ENCODE measurements at regions of chr16 and their contacts with region 1.

Region 1: GRCh38 chr16:85821441-85822135 is 22.1 kb downstream of the COX4I1 start:
- DNase-seq: peak; percentile 56 to 88 (median 79)
- ATAC-seq: peak; percentile 93
- H3K4me3 ChIP-seq: no peak overlapping the region
- H3K4me3 Mint-ChIP-seq: no peak overlapping the region
- H3K27ac ChIP-seq: no peak overlapping the region
- H3K27ac Mint-ChIP-seq: no peak overlapping the region
- H3K4me1 ChIP-seq: no peaks in the 10 kb centered on the region
- H3K4me1 Mint-ChIP-seq: peaks cover 0 to 7% (median 5%) of the 10 kb centered on the region in 7 donors
- H3K27me3 ChIP-seq: no peaks in the 10 kb centered on the region
- H3K27me3 Mint-ChIP-seq: peaks cover 0 to 6% (median 4%) of the 10 kb centered on the region in 5 donors

Region 2: GRCh38 chr16:84315394-84315793 is 1506.2 kb before region 1 on chr16:
- CTCF ChIA-PET with region 1: no interaction called
- POLR2A ChIA-PET with region 1: no interaction called
- intact Hi-C with region 1: no loop called
- DNase-seq: no peak
- ATAC-seq: no peak
- H3K4me3 ChIP-seq: no peak overlapping the region
- H3K4me3 Mint-ChIP-seq: no peak overlapping the region
- H3K27ac ChIP-seq: no peak overlapping the region
- H3K27ac Mint-ChIP-seq: no peak overlapping the region
- H3K4me1 ChIP-seq: no peaks in the 10 kb centered on the region
- H3K4me1 Mint-ChIP-seq: peaks cover 0 to 5% (median 0%) of the 10 kb centered on the region in 7 donors
- H3K27me3 ChIP-seq: no peaks in the 10 kb centered on the region
- H3K27me3 Mint-ChIP-seq: peaks cover 17 to 40% (median 33%) of the 10 kb centered on the region in 5 donors

Region 3: DNA sequence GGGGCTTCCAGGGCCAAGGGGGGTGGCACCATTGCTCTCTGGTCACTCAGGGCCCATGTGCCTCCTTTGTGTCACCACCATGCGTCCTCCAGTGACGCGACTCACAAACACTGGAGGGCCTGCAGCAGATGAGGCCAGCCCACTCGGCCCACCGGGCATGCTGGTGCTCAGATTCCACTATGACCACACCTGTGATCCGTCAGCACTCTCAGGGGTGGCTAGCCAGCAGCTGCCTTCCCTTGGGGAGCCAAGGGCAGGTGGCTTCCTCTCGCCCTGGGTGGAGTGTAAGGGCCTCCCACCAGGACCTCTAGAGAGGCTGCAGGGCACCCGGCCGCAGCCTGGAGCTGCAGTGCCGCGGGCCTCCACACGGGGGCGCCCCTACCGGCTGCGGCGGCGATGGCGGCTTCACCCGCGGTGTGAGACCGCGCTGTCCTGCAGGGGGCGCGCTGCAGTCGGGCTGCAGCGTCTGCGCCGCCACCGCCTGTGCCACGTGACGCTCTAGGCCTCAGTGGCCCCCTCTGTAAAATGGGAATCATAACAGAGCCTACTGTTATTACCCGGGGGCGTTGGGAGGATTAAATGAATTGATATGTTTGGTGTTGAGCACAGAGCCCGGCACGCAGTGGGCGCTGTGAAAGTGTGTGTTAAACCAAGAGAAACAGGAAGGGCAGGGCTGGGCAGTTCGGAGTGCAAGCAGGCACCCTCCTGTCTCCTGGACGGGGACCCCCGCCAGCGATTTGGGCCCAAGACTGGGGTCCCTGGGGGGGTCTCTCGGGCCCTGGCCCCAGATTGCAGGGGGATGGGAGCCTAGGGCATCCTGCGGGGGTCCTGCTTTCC is 400.9 kb before region 1 on chr16:
- CTCF ChIA-PET with region 1: no interaction called
- POLR2A ChIA-PET with region 1: no interaction called
- intact Hi-C with region 1: no loop called
- DNase-seq: peak; percentile 29 to 90 (median 71)
- ATAC-seq: peak; percentile 95
- H3K4me3 ChIP-seq: no peak overlapping the region
- H3K4me3 Mint-ChIP-seq: no peak overlapping the region
- H3K27ac ChIP-seq: no peak overlapping the region
- H3K27ac Mint-ChIP-seq: no peak overlapping the region
- H3K4me1 ChIP-seq: peaks cover 0 to 10% of the 10 kb centered on the region in 2 donors
- H3K4me1 Mint-ChIP-seq: peaks cover 0 to 10% (median 0%) of the 10 kb centered on the region in 7 donors
- H3K27me3 ChIP-seq: no peaks in the 10 kb centered on the region
- H3K27me3 Mint-ChIP-seq: peaks cover 0 to 4% (median 0%) of the 10 kb centered on the region in 5 donors

Region 4: GRCh38 chr16:85799497-85800337 is 21.9 kb before region 1 on chr16 and contains the starts of genes COX4I1 and EMC8:
- CTCF ChIA-PET with region 1: interaction called, 4 read pairs
- POLR2A ChIA-PET with region 1: no interaction called
- intact Hi-C with region 1: loop called in 1 of 2 experiments (anchors 1 kb)
- DNase-seq: peak; percentile 86 to 95 (median 90)
- ATAC-seq: peak; percentile 92
- H3K4me3 ChIP-seq: peak within 1 kb of the TSS; percentile 81
- H3K4me3 Mint-ChIP-seq: peak within 1 kb of the TSS; percentile 86 to 94 (median 90)
- H3K27ac ChIP-seq: peak within 1 kb of the TSS; percentile 99
- H3K27ac Mint-ChIP-seq: peak within 1 kb of the TSS; percentile 90 to 98 (median 95)
- H3K4me1 ChIP-seq: peaks cover 18 to 26% of the 10 kb centered on the region in 2 donors
- H3K4me1 Mint-ChIP-seq: peaks cover 37 to 77% (median 68%) of the 10 kb centered on the region in 7 donors
- H3K27me3 ChIP-seq: no peaks in the 10 kb centered on the region
- H3K27me3 Mint-ChIP-seq: no peaks in the 10 kb centered on the region
- total RNA-seq, gene COX4I1: 479 to 692 (median 661) TPM
- total RNA-seq, gene EMC8: 22.4 to 31.8 (median 28.7) TPM

Region 5: GRCh38 chr16:85935974-85936760 is 114.6 kb after region 1 on chr16:
- CTCF ChIA-PET with region 1: interaction called, 9 read pairs
- POLR2A ChIA-PET with region 1: no interaction called
- intact Hi-C with region 1: loop called (anchors 1 kb)
- DNase-seq: peak; percentile 40 to 80 (median 74)
- ATAC-seq: peak; percentile 91
- H3K4me3 ChIP-seq: peak overlapping the region; percentile 52
- H3K4me3 Mint-ChIP-seq: peak overlapping the region; percentile 72 to 88 (median 82)
- H3K27ac ChIP-seq: peak overlapping the region; percentile 68
- H3K27ac Mint-ChIP-seq: peak overlapping the region; percentile 91 to 98 (median 95)
- H3K4me1 ChIP-seq: peaks cover 25 to 29% of the 10 kb centered on the region in 2 donors
- H3K4me1 Mint-ChIP-seq: peaks cover 34 to 54% (median 40%) of the 10 kb centered on the region in 7 donors
- H3K27me3 ChIP-seq: no peaks in the 10 kb centered on the region
- H3K27me3 Mint-ChIP-seq: peaks cover 0 to 3% (median 0%) of the 10 kb centered on the region in 5 donors

Region 6: GRCh38 chr16:85986931-85987749 is 165.6 kb after region 1 on chr16:
- CTCF ChIA-PET with region 1: interaction called, 168 read pairs
- POLR2A ChIA-PET with region 1: interaction called, 5 read pairs
- intact Hi-C with region 1: loop called (anchors 1 kb)
- DNase-seq: peak in 7 of 9 donors; percentile 11 to 44 (median 26)
- ATAC-seq: no peak
- H3K4me3 ChIP-seq: no peak overlapping the region
- H3K4me3 Mint-ChIP-seq: peak overlapping the region in 1 of 10 donors; percentile 56
- H3K27ac ChIP-seq: no peak overlapping the region
- H3K27ac Mint-ChIP-seq: peak overlapping the region in 1 of 9 donors; percentile 81
- H3K4me1 ChIP-seq: peaks cover 3 to 4% of the 10 kb centered on the region in 2 donors
- H3K4me1 Mint-ChIP-seq: peaks cover 0 to 53% (median 6%) of the 10 kb centered on the region in 7 donors
- H3K27me3 ChIP-seq: no peaks in the 10 kb centered on the region
- H3K27me3 Mint-ChIP-seq: peaks cover 0 to 16% (median 5%) of the 10 kb centered on the region in 5 donors

Region 7: DNA sequence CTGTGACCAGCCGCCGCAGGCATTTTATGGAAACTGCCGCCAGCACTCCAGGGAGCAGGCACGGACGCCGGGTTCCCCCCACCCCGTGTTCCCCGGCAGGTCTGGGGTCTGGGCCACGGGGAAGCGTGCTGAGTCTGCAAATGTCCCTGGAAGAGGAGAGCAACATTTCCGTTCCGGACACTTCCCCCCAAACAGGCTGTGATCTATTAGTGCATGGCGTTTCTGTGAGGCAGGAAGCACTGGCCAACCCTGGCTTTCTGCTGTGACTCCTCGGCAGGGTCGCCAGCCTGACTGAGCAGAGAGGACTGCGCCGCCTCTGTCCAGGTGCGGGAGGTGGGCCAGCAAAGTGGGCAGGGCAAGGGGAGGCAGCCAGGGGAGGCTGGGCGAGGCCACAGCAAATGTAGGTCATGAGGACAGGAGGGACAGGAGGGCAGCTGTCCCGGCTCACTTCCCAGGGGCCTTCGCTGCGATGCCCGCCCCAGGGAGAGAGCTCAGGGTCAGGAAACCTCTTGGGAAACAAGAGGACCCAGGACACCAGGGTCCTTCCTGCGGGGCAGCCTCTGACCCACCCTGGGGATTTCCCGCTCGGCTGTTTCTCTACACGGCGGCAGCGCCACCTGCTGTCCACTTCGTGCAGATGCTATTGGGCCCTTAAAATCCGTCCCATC is 698.2 kb after region 1 on chr16:
- CTCF ChIA-PET with region 1: no interaction called
- POLR2A ChIA-PET with region 1: no interaction called
- intact Hi-C with region 1: loop called in 1 of 2 experiments (anchors 2 kb)
- DNase-seq: peak in 8 of 9 donors; percentile 22 to 71 (median 30)
- ATAC-seq: peak; percentile 78
- H3K4me3 ChIP-seq: no peak overlapping the region
- H3K4me3 Mint-ChIP-seq: peak overlapping the region in 7 of 10 donors; percentile 29 to 77 (median 38)
- H3K27ac ChIP-seq: no peak overlapping the region
- H3K27ac Mint-ChIP-seq: no peak overlapping the region
- H3K4me1 ChIP-seq: peaks cover 0 to 3% of the 10 kb centered on the region in 2 donors
- H3K4me1 Mint-ChIP-seq: peaks cover 0 to 9% (median 3%) of the 10 kb centered on the region in 7 donors
- H3K27me3 ChIP-seq: peaks cover 0 to 15% of the 10 kb centered on the region in 2 donors
- H3K27me3 Mint-ChIP-seq: peaks cover 31 to 49% (median 49%) of the 10 kb centered on the region in 5 donors